B cell (primary cell): ENCODE measurements at regions of chr4 and their contacts with region 1.

Region 1: GRCh38 chr4:165096776-165097175 is 15.9 kb downstream of the TMEM192 start:
- DNase-seq: no peak
- ATAC-seq: no peak
- H3K4me3 ChIP-seq: no peak overlapping the region
- H3K4me3 Mint-ChIP-seq: no peak overlapping the region
- H3K27ac ChIP-seq: no peak overlapping the region
- H3K27ac Mint-ChIP-seq: no peak overlapping the region
- H3K4me1 ChIP-seq: no peaks in the 10 kb centered on the region
- H3K4me1 Mint-ChIP-seq: no peaks in the 10 kb centered on the region
- H3K27me3 ChIP-seq: no peaks in the 10 kb centered on the region
- H3K27me3 Mint-ChIP-seq: no peaks in the 10 kb centered on the region
- CTCF ChIP-seq: peak; percentile 50

Region 2: GRCh38 chr4:164706675-164707074 is 390.1 kb before region 1 on chr4:
- CTCF ChIA-PET with region 1: no interaction called
- POLR2A ChIA-PET with region 1: no interaction called
- intact Hi-C with region 1: no loop called
- DNase-seq: no peak
- ATAC-seq: no peak
- H3K4me3 ChIP-seq: no peak overlapping the region
- H3K4me3 Mint-ChIP-seq: no peak overlapping the region
- H3K27ac ChIP-seq: no peak overlapping the region
- H3K27ac Mint-ChIP-seq: no peak overlapping the region
- H3K4me1 ChIP-seq: no peaks in the 10 kb centered on the region
- H3K4me1 Mint-ChIP-seq: no peaks in the 10 kb centered on the region
- H3K27me3 ChIP-seq: no peaks in the 10 kb centered on the region
- H3K27me3 Mint-ChIP-seq: no peaks in the 10 kb centered on the region
- CTCF ChIP-seq: no peak

Region 3: DNA sequence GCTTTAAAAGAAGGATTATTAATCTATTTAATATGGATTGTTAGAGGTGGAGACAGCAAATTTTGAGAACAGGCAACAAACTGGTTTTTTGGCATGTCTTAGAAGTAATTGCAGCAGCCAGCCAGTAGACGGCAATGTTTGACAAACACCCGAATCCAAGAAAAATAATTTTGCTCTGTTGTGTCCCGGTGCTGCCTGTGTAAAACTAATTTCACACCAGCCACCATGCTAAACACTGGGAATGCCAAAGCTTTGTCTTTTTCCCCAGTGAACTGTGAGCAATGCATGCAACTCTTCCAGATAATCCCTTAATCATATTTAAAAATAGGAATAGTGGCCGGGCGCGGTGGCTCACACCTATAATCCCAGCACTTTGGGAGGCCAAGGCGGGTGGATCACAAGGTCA is 317.0 kb before region 1 on chr4:
- CTCF ChIA-PET with region 1: interaction called, 7 read pairs
- POLR2A ChIA-PET with region 1: no interaction called
- intact Hi-C with region 1: loop called (anchors 5 kb)
- DNase-seq: peak; percentile 23
- ATAC-seq: no peak
- H3K4me3 ChIP-seq: no peak overlapping the region
- H3K4me3 Mint-ChIP-seq: no peak overlapping the region
- H3K27ac ChIP-seq: no peak overlapping the region
- H3K27ac Mint-ChIP-seq: no peak overlapping the region
- H3K4me1 ChIP-seq: no peaks in the 10 kb centered on the region
- H3K4me1 Mint-ChIP-seq: no peaks in the 10 kb centered on the region
- H3K27me3 ChIP-seq: no peaks in the 10 kb centered on the region
- H3K27me3 Mint-ChIP-seq: no peaks in the 10 kb centered on the region
- CTCF ChIP-seq: peak; percentile 70

Region 4: DNA sequence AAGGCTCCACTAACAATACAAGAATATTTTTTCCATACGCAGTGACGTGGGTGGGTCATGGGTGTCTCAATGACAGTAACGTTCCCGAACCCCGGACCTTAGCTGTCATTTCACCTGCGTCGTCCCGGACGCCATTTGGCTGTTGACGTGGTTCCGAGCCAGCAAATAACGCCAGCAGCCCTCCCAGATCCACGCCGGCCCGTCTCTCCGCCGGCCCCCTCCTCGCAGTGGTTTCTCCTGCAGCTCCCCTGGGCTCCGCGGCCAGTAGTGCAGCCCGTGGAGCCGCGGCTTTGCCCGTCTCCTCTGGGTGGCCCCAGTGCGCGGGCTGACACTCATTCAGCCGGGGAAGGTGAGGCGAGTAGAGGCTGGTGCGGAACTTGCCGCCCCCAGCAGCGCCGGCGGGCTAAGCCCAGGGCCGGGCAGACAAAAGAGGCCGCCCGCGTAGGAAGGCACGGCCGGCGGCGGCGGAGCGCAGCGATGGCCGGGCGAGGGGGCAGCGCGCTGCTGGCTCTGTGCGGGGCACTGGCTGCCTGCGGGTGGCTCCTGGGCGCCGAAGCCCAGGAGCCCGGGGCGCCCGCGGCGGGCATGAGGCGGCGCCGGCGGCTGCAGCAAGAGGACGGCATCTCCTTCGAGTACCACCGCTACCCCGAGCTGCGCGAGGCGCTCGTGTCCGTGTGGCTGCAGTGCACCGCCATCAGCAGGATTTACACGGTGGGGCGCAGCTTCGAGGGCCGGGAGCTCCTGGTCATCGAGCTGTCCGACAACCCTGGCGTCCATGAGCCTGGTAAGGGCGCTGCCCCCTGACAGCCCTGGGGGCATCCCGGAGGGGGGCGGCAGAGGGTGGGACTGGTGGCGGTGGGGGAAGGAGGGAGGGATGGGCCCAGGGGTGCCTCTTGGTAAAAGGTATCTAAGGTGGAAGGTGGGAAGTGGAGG is 282.2 kb after region 1 on chr4 and contains the start of gene CPE:
- CTCF ChIA-PET with region 1: no interaction called
- POLR2A ChIA-PET with region 1: no interaction called
- intact Hi-C with region 1: no loop called
- DNase-seq: peak; percentile 72
- ATAC-seq: peak; percentile 98
- H3K4me3 ChIP-seq: peak within 1 kb of the TSS in 4 of 5 experiments; percentile 26 to 52 (median 36)
- H3K4me3 Mint-ChIP-seq: peak within 1 kb of the TSS; percentile 83
- H3K27ac ChIP-seq: no peak within 1 kb of the TSS
- H3K27ac Mint-ChIP-seq: no peak within 1 kb of the TSS
- H3K4me1 ChIP-seq: peaks cover 10 to 11% of the 10 kb centered on the region in 2 donors
- H3K4me1 Mint-ChIP-seq: peaks cover 8% of the 10 kb centered on the region
- H3K27me3 ChIP-seq: peaks cover 0 to 45% (median 26%) of the 10 kb centered on the region in 4 experiments
- H3K27me3 Mint-ChIP-seq: peaks cover 56% of the 10 kb centered on the region
- CTCF ChIP-seq: no peak
- total RNA-seq, gene CPE: not detected in 2 replicates